ENCODE measurements at regions of chr4 and their contacts with region 1.

Region 1: GRCh38 chr4:142405021-142405694 is 440.9 kb downstream of the INPP4B start:
- DNase-seq: peak; percentile 38

Region 2: GRCh38 chr4:142379277-142380057 is 25.7 kb before region 1 on chr4:
- CTCF ChIA-PET with region 1: no interaction called
- POLR2A ChIA-PET with region 1: interaction called, 10 read pairs
- DNase-seq: no peak

Region 3: DNA sequence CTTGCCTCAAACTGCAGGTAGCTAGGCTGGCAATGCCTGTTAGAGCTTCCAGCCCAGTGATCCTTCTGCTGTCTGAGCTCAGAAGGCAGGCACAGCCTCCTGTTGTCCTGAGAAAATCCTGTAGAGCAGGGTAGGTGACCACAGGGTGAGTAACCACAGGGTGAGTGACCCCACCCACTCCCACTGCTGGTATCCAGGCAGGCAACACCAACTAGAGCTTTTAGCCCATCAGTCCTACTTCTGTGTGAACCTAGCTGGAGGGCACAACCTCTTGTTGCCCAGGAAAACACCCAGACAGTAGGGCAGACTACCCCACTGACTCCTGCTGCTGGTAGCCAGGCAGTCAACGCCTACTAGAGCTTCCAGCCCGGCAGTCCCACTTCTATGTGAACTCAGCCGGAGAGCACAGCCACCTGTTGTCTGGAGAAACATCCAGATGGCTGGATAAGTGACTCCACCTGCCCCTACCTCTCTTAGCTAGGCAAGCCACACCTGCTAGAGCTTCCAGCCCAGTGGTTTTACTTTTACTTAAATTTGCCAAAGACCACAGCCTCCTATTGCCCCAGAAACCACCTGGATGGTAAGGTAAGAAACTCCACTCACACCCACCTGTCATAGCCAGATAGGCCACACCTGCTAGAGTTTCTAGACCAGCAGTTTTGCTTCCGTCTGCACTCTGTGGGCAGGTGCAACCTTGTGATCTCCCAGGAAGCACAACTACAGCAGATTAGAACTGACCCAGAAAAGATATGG is 69.4 kb after region 1 on chr4:
- CTCF ChIA-PET with region 1: no interaction called
- POLR2A ChIA-PET with region 1: no interaction called
- DNase-seq: no peak

Region 4: GRCh38 chr4:142500974-142501373 is 95.8 kb after region 1 on chr4:
- CTCF ChIA-PET with region 1: no interaction called
- POLR2A ChIA-PET with region 1: no interaction called
- DNase-seq: no peak